ENCODE measurements at regions of chr13 and their contacts with region 1.

Region 1: DNA sequence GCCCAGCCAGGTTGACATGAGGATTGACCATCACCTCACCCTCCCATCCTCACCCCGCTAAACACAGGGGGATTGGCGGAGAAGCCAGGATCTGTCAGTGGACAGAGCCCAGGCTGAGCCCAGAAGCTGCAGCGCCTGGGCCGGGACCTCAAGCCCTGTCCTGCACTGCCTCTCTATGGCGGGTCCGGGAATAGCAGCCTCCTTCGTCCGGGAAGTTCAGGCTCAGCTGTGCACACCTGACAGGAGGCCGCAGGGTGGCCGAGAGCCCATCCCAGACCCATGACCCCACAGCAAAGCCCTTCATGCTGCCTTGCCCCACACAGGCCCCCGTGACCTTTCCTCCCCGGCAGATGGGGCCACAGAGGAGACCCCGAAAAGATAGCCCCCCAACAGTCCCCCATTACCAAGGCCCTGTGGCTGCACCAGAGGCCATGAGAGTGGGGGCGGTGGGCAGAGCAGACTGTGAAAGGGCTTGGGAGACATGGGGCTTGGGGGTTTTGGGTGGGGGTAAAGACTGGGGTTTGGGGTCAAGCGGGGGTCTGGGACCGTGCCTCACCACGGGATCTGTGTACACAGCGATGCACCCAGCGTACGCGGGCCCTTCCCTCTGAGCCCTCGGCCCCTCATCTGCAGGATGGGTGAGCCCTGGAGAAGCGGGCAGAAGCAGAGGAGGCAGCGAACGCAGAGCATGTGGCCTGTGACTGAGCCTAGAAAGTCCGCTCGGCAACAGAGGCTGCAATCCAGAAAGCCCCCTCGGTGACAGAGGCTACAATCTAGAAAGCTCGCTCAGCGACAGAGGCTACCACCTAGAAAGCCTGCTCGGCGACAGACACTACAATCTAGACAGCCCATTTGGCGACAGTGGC is 68.1 kb downstream of the SPACA7 start:
- DNase-seq: peak; percentile 94
- ATAC-seq: peak; percentile 95
- H3K4me3 Mint-ChIP-seq: no peak overlapping the region
- H3K27ac Mint-ChIP-seq: no peak overlapping the region
- H3K4me1 Mint-ChIP-seq: peaks cover 10% of the 10 kb centered on the region
- H3K27me3 Mint-ChIP-seq: peaks cover 14% of the 10 kb centered on the region
- CTCF ChIP-seq: peak; percentile 93

Region 2: DNA sequence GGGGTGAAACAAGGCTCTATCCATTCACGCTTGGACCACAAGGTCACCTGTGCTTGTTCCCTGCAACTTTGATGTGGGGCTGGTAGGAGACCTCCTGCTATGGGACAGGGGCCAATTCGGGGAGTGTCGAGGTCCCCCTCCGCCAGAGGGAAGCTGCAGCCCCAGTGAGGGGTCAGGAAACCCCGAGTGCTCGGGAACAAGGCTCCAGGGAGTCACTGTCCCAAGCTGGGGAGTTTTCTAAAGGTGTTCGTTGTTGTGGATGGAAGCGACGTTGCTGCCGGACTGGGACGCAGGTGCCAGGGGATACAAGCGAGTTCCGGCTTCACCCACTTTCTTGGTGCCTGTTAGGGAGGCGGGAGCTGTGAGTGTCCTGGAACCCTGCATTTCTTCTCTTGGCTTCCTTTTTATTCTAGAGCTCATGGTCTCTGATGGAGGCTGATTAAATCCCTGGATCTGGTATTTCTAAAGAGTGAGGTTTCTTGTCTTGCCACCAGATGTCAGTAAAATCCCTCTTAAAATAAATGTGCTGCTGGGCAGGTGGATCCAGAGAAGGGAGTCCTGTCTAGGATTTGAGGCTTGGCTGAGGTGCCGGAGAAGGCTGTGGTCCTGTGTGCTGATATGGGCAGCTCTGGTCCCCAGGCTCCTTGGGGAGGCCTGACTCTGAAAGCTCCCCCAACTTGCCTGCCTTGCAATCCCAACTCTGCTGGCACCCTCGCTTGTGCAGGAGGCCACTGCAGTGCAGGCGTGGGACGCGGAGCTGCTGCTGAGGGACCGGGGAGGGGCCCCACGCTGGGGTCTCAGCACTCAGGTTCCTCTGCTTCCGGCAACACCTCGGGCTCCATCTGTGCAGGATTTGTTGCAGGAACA is 969.9 kb before region 1 on chr13:
- CTCF ChIA-PET with region 1: interaction called, 20 read pairs
- POLR2A ChIA-PET with region 1: no interaction called
- DNase-seq: no peak
- ATAC-seq: peak; percentile 86
- H3K4me3 Mint-ChIP-seq: no peak overlapping the region
- H3K27ac Mint-ChIP-seq: no peak overlapping the region
- H3K4me1 Mint-ChIP-seq: no peaks in the 10 kb centered on the region
- H3K27me3 Mint-ChIP-seq: no peaks in the 10 kb centered on the region
- CTCF ChIP-seq: peak; percentile 50

Region 3: DNA sequence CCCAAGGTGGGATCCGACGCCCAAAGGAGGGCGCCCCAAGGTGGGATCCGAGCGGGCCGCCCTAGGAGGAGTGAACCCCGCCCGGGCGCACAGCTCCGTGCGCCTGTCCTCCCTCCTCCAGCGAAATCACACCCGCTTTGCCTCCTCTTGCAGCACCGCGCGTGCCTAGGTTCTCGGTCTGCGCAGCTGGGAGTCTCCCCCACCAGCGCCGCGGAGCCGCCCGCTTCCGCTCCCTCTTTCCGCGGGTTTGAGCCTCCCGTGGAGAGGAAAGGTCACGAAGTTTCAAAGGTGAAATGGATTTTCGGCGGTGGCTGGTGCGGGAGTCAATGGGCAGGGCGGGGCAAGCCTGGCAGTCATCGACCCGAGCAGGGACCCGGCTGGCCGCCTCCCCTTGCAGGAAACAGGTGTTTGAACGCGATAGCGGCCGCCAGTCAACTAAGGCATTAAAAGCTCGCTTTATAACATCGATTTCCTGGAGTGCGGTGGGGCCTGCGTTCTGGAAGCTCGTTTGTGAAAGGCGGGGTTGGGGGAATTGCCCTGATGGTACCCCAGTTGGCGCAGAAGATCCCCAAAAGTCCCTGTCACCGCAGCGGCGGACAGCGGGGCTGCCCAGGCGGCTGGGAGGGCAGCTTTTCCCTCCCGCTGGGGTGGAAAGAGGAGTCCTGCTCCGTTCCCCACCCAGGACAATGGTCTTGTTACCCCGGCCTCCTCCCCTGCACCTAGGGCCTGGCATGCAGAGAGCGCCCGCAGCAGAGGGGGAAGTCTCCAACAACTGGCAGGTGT is 386.3 kb before region 1 on chr13:
- CTCF ChIA-PET with region 1: interaction called, 63 read pairs
- POLR2A ChIA-PET with region 1: no interaction called
- DNase-seq: peak; percentile 50
- ATAC-seq: no peak
- H3K4me3 Mint-ChIP-seq: peak overlapping the region; percentile 68
- H3K27ac Mint-ChIP-seq: no peak overlapping the region
- H3K4me1 Mint-ChIP-seq: peaks cover 57% of the 10 kb centered on the region
- H3K27me3 Mint-ChIP-seq: peaks cover 99% of the 10 kb centered on the region
- CTCF ChIP-seq: no peak

Region 4: GRCh38 chr13:112073245-112074138 is 370.7 kb before region 1 on chr13:
- CTCF ChIA-PET with region 1: interaction called, 13 read pairs
- POLR2A ChIA-PET with region 1: interaction called, 4 read pairs
- DNase-seq: peak; percentile 78
- ATAC-seq: peak; percentile 48
- H3K4me3 Mint-ChIP-seq: peak overlapping the region; percentile 82
- H3K27ac Mint-ChIP-seq: peak overlapping the region; percentile 57; the same call in 1 of the 2 replicates
- H3K4me1 Mint-ChIP-seq: peaks cover 45% of the 10 kb centered on the region
- H3K27me3 Mint-ChIP-seq: peaks cover 70% of the 10 kb centered on the region
- CTCF ChIP-seq: no peak

Region 5: DNA sequence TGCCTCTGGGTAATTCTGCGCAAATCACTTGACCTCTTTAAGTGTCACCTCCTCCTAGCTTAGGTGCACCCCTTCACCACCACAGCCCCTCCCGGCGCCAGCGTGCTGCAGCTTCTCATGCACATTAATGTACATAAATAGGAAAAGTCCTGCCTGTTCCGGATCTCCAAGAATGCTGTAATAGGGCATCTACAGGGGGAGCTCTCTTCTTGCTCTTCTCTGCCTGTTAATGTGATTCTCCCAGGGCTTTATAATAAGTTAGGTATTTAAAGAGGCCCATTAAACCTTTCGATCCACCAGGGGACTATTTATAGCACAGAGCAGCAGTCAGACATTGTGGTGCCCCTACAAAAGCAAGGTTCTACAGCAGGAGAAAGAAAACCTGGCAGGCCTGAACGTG is 342.0 kb before region 1 on chr13:
- CTCF ChIA-PET with region 1: interaction called, 26 read pairs
- POLR2A ChIA-PET with region 1: no interaction called
- DNase-seq: no peak
- ATAC-seq: no peak
- H3K4me3 Mint-ChIP-seq: no peak overlapping the region
- H3K27ac Mint-ChIP-seq: no peak overlapping the region
- H3K4me1 Mint-ChIP-seq: peaks cover 46% of the 10 kb centered on the region
- H3K27me3 Mint-ChIP-seq: peaks cover 72% of the 10 kb centered on the region
- CTCF ChIP-seq: no peak

Region 6: DNA sequence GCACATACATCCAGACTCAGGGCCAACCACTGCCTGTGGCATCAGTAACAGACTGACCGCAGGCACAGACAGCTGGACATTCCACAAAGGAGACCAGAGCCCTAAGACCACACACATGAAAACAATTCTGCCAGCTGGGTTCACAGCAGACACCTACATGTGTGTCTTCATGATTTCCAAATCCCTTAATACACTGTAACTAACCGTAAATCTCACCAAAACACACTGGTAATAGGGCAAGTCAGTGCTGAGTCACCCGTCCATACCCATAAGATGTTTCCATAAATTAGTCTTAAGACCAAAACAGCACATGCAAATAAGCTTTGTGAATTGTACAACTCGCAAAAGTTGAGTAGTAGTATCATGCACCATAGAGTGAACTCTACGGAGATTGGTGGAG is 78.3 kb after region 1 on chr13:
- CTCF ChIA-PET with region 1: no interaction called
- POLR2A ChIA-PET with region 1: no interaction called
- DNase-seq: no peak
- ATAC-seq: no peak
- H3K4me3 Mint-ChIP-seq: no peak overlapping the region
- H3K27ac Mint-ChIP-seq: no peak overlapping the region
- H3K4me1 Mint-ChIP-seq: no peaks in the 10 kb centered on the region
- H3K27me3 Mint-ChIP-seq: no peaks in the 10 kb centered on the region
- CTCF ChIP-seq: no peak